Activated T-helper 1 cell treated with anti-CD3 and anti-CD28 coated beads, Interleukin-12 subunit alpha, Interleukin-12 subunit beta, Interleukin-2, Interleukin-4 antibody, amounts not matched to agents 30 ng/mL and 10 ng/mL and 1 ng/mL, durations not matched to agents 14 hours and 24 hours and 36 hours (primary cell): ENCODE measurements at regions of chr22 and their contacts with region 1.

Region 1: DNA sequence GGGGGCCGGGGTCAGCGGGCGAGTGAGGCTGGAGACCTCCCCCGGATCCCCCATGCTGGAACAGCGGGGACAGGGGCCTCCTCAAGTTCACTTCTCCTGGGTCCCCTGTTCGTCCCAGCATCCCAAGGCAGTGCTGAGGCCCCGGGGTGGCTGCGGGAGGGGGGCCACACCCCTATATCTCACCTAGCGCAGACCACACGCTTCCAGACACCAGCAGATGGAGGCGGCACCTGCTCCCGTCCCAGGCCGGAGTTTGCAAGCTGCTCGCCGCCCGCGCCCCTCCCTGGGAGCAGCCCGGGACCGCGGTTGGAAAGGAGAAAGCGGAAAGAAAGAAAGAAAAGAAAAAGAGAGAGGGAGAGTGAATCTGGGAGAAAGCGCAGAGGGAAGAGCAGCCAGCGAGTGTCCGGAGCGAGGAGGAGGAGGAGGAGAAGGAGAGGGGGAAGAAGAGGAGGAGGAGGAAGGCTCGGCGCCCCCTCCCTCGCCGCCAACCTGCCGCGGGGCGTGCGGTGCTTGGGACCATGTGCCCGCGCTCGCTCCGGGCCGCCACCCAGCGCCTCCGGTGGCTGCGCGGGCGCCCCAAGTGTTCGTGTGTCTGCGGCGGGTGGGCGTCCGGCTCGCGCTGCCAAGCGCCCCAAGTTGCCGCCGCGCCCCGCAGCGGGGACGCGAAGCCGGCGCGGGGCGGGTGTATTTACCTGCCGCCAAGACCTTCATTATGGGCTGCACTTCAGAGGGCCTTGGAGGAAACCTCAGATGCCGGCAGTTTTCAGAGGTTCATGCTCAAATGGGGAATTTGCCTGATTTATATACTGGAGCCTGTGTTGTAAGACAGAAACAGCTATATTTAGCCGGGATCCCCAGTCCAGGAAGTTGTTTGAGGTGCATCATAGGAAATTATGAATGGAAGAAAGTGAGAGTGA is at the start of gene LIF:
- DNase-seq: peak; percentile 53
- H3K4me3 Mint-ChIP-seq: peak within 1 kb of the TSS; percentile 100
- H3K27ac Mint-ChIP-seq: peak within 1 kb of the TSS; percentile 100
- H3K4me1 Mint-ChIP-seq: peaks cover 64% of the 10 kb centered on the region
- H3K27me3 Mint-ChIP-seq: no peaks in the 10 kb centered on the region
- total RNA-seq, gene LIF: 450 and 455 TPM in 2 replicates

Region 2: DNA sequence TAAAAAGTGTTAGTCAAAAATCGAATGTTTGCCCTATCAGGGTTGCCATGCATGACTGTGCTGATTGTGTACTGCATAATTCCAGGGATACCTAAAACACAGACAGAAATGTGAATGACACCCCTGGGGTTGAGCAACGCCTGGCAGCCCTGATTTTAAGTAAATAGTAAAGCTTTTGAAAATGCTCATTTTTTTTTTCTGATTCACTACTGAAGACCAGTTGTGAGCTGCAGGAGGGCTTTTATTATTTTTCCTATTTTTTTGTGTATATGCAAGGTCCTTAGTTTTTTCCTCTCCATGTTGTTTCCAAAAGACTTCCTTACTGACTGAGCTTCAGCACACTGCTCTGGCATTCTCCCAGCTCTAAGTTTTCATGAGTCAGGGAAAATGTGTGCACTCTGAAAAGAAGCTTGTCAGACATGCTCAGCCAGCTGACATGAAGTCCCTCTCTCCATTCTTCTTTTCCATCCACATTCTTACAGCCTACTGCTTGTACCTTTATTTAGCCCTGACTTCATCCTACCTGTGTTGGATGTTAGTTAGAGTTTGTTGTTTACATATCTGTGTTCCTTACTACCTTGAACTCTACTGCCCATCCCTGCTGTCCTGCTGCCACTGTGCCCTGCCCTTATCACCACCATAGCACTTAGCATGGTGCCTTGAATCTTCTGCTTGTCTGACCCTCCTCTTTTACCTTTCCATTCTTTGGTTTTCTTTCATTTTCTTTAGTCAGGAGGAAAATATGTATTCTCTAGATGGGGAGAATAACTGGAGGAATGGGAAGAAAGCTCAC is 86.5 kb before region 1 on chr22:
- intact Hi-C with region 1: loop called (anchors 1 kb)
- DNase-seq: no peak
- H3K4me3 Mint-ChIP-seq: peak overlapping the region; percentile 45
- H3K27ac Mint-ChIP-seq: peak overlapping the region; percentile 93
- H3K4me1 Mint-ChIP-seq: peaks cover 70% of the 10 kb centered on the region
- H3K27me3 Mint-ChIP-seq: peaks cover 2% of the 10 kb centered on the region

Region 3: GRCh38 chr22:30183861-30184278 is 62.4 kb before region 1 on chr22:
- intact Hi-C with region 1: loop called (anchors 1 kb)
- DNase-seq: peak; percentile 25
- H3K4me3 Mint-ChIP-seq: peak overlapping the region; percentile 69
- H3K27ac Mint-ChIP-seq: peak overlapping the region; percentile 95
- H3K4me1 Mint-ChIP-seq: peaks cover 96% of the 10 kb centered on the region
- H3K27me3 Mint-ChIP-seq: no peaks in the 10 kb centered on the region

Region 4: GRCh38 chr22:30221121-30221992 is 24.9 kb before region 1 on chr22:
- intact Hi-C with region 1: loop called (anchors 2 kb)
- DNase-seq: peak; percentile 61
- H3K4me3 Mint-ChIP-seq: peak overlapping the region; percentile 65
- H3K27ac Mint-ChIP-seq: peak overlapping the region; percentile 89
- H3K4me1 Mint-ChIP-seq: peaks cover 74% of the 10 kb centered on the region
- H3K27me3 Mint-ChIP-seq: no peaks in the 10 kb centered on the region